ENCODE measurements at regions of chr1 and their contacts with region 1.

Region 1: DNA sequence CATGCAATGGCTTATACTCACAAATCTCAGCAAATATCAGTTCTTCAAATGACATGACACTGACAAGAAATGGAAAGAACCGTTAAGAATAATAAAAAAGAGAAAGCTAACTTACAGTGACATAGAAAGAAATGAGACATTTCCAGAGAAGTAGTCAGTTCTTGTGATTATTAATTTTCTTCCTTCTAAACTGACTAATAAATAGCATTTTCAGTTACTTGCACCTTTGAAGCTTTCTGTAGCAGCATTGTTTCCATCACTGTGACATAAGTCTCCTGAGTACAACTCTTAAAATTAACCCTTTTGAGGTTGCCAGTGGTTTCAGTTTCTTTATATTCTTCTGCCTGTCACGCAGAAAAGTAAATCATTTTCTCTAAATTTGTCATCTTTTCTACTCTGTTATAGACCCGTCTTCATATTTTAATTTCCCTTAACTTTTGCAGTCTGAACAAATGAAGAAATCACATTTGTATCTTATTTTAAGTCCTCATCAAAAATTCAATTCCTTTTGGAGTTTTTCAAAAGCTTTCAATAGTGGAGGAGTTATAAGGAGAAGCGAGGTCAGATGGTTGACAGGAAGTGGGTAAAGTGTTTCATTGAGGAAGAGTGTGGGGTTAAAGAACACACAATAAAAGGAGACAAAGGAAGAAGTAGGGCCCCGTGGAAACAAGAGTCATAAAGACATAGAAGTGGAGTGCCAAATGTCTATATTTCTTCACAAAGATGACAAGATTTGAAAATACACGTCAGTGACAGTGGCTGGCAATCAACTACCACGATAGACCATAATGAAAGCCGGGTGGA is 57.9 kb upstream of the S1PR1 start:
- DNase-seq: peak; percentile 61
- H3K4me3 Mint-ChIP-seq: peak overlapping the region; percentile 86
- H3K27ac Mint-ChIP-seq: peak overlapping the region; percentile 98
- H3K4me1 Mint-ChIP-seq: peaks cover 80% of the 10 kb centered on the region
- H3K27me3 Mint-ChIP-seq: no peaks in the 10 kb centered on the region

Region 2: DNA sequence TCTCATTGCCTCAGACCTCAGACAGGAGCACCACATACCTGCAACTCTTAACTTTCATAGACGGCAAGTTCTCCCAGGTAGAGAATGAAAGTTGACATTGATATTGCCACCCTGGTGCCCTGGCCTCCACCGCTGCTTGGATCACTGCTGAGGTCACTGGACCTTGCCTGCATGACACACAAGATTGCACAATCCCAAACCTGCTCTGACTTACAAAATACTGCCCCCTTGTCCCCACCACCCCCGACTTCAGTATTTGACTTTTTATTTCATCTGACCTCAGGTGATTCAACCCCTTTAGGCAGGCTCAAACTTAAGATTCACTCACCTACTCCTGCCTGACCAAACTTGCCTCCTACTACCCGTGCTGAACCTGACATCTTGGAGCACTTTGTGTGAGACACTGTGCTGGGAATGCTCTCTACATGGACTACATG is 14.9 kb after region 1 on chr1:
- CTCF ChIA-PET with region 1: interaction called, 16 read pairs
- POLR2A ChIA-PET with region 1: no interaction called
- DNase-seq: no peak
- H3K4me3 Mint-ChIP-seq: no peak overlapping the region
- H3K27ac Mint-ChIP-seq: no peak overlapping the region
- H3K4me1 Mint-ChIP-seq: peaks cover 9% of the 10 kb centered on the region
- H3K27me3 Mint-ChIP-seq: no peaks in the 10 kb centered on the region

Region 3: DNA sequence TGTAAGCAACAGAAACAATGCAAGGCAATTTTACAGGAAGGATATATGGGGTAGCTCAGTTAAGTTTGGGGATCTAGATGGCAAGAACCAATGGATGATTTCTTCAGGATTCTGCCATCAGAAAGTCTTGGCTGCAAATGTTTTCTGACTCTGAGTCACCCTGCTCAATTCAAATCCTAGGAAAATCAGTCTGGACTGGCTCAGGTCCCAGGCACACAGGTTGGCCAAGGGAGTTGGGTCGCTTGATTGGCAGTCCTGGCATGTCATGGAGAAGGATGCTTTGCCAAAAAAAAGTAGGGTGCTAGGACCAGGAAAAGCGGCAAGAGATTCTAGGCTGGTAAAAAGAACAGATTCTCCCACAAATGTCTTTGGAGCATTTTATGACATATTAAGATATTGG is 29.0 kb after region 1 on chr1:
- CTCF ChIA-PET with region 1: no interaction called
- POLR2A ChIA-PET with region 1: no interaction called
- DNase-seq: no peak
- H3K4me3 Mint-ChIP-seq: no peak overlapping the region
- H3K27ac Mint-ChIP-seq: no peak overlapping the region
- H3K4me1 Mint-ChIP-seq: peaks cover 11% of the 10 kb centered on the region
- H3K27me3 Mint-ChIP-seq: no peaks in the 10 kb centered on the region